Activated B cell treated with CpG ODN at 0.5 μM for 24 hours (primary cell): ENCODE measurements at regions of chr19 and their contacts with region 1.

Region 1: GRCh38 chr19:29941828-29942403 is at the start of gene URI1:
- DNase-seq: peak; percentile 99
- ATAC-seq: peak; percentile 91
- H3K4me3 Mint-ChIP-seq: peak within 1 kb of the TSS; percentile 96
- H3K27ac Mint-ChIP-seq: peak within 1 kb of the TSS; percentile 92
- H3K4me1 Mint-ChIP-seq: peaks cover 36% of the 10 kb centered on the region
- H3K27me3 Mint-ChIP-seq: peaks cover 7% of the 10 kb centered on the region
- CTCF ChIP-seq: no peak
- total RNA-seq, gene URI1: 49.8 and 50.6 TPM in 2 replicates

Region 2: GRCh38 chr19:29212648-29213573 is 729.0 kb before region 1 on chr19 and contains the start of gene UQCRFS1:
- CTCF ChIA-PET with region 1: no interaction called
- POLR2A ChIA-PET with region 1: no interaction called
- intact Hi-C with region 1: loop called (anchors 2 kb)
- DNase-seq: peak; percentile 92
- ATAC-seq: peak; percentile 96
- H3K4me3 Mint-ChIP-seq: peak within 1 kb of the TSS; percentile 92
- H3K27ac Mint-ChIP-seq: peak within 1 kb of the TSS; percentile 88
- H3K4me1 Mint-ChIP-seq: peaks cover 38% of the 10 kb centered on the region
- H3K27me3 Mint-ChIP-seq: peaks cover 9% of the 10 kb centered on the region
- CTCF ChIP-seq: no peak
- total RNA-seq, gene UQCRFS1: 22.9 and 24.4 TPM in 2 replicates

Region 3: GRCh38 chr19:29680447-29680846 is 261.5 kb before region 1 on chr19:
- CTCF ChIA-PET with region 1: no interaction called
- POLR2A ChIA-PET with region 1: no interaction called
- intact Hi-C with region 1: loop called (anchors 1 kb)
- DNase-seq: peak; percentile 55
- ATAC-seq: peak; percentile 97
- H3K4me3 Mint-ChIP-seq: peak overlapping the region; percentile 60
- H3K27ac Mint-ChIP-seq: peak overlapping the region; percentile 79
- H3K4me1 Mint-ChIP-seq: peaks cover 33% of the 10 kb centered on the region
- H3K27me3 Mint-ChIP-seq: no peaks in the 10 kb centered on the region
- CTCF ChIP-seq: no peak

Region 4: DNA sequence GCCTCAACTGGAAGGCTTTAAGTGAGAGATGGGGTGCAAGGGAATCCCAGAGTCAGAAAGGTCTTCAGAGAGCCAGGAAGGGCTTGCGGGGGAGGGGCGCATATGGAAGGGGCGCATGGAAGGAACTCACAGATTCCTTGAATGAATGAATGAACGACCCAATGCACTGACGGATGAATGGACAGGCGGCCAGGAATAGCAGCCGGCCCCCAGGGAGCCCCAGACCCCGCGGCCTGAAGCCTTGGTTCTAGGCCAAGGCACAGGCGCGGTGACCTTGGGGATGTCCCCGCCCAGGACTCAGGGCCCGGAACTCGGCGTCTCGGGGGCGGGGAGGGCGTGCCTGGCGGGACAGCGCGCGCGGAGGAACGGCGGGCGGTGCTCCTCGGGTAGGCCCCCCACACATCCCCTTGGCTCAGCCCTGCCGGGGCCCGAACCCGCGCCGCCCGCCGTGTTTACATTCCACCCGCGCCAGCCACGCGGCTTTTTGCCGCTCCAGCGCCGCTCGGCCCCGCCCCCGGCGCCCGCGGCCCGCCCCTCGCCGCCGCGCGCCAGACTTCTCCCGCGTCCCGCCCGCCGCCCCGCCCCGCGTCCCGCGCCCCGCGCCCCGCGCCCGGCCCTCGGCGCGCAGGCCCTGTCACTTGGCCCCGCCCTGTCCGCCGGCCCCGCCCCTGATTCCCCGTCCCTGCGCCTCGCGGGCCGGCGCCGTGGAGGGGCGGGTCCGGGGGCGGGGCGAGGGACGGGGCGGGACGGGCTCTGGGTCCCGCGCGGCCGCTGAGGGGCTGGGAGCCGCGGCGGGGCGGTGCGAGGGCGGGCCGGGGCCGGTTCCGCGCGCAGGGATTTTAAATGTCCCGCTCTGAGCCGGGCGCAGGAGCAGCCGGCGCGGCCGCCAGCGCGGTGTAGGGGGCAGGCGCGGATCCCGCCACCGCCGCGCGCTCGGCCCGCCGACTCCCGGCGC is 130.5 kb before region 1 on chr19 and contains the start of gene CCNE1:
- CTCF ChIA-PET with region 1: no interaction called
- POLR2A ChIA-PET with region 1: no interaction called
- intact Hi-C with region 1: loop called (anchors 1 kb)
- DNase-seq: peak; percentile 95
- ATAC-seq: peak; percentile 94
- H3K4me3 Mint-ChIP-seq: peak within 1 kb of the TSS; percentile 85
- H3K27ac Mint-ChIP-seq: peak within 1 kb of the TSS; percentile 77
- H3K4me1 Mint-ChIP-seq: peaks cover 18% of the 10 kb centered on the region
- H3K27me3 Mint-ChIP-seq: no peaks in the 10 kb centered on the region
- CTCF ChIP-seq: no peak
- total RNA-seq, gene CCNE1: 3.4 and 4.1 TPM in 2 replicates

Region 5: GRCh38 chr19:29844891-29845572 is 96.9 kb before region 1 on chr19:
- CTCF ChIA-PET with region 1: no interaction called
- POLR2A ChIA-PET with region 1: interaction called, 5 read pairs
- intact Hi-C with region 1: loop called (anchors 1 kb)
- DNase-seq: peak; percentile 94
- ATAC-seq: peak; percentile 80
- H3K4me3 Mint-ChIP-seq: peak overlapping the region; percentile 86
- H3K27ac Mint-ChIP-seq: peak overlapping the region; percentile 68
- H3K4me1 Mint-ChIP-seq: peaks cover 12% of the 10 kb centered on the region
- H3K27me3 Mint-ChIP-seq: peaks cover 9% of the 10 kb centered on the region
- CTCF ChIP-seq: no peak

Region 6: GRCh38 chr19:29978080-29978479 is 36.2 kb after region 1 on chr19:
- CTCF ChIA-PET with region 1: no interaction called
- POLR2A ChIA-PET with region 1: no interaction called
- intact Hi-C with region 1: loop called (anchors 5 kb)
- DNase-seq: no peak
- ATAC-seq: no peak
- H3K4me3 Mint-ChIP-seq: no peak overlapping the region
- H3K27ac Mint-ChIP-seq: no peak overlapping the region
- H3K4me1 Mint-ChIP-seq: peaks cover 43% of the 10 kb centered on the region
- H3K27me3 Mint-ChIP-seq: no peaks in the 10 kb centered on the region
- CTCF ChIP-seq: no peak

Region 7: GRCh38 chr19:30227661-30228428 is 285.9 kb after region 1 on chr19:
- CTCF ChIA-PET with region 1: no interaction called
- POLR2A ChIA-PET with region 1: no interaction called
- intact Hi-C with region 1: loop called (anchors 10 kb)
- DNase-seq: peak; percentile 41
- ATAC-seq: peak; percentile 74
- H3K4me3 Mint-ChIP-seq: no peak overlapping the region
- H3K27ac Mint-ChIP-seq: no peak overlapping the region
- H3K4me1 Mint-ChIP-seq: peaks cover 36% of the 10 kb centered on the region
- H3K27me3 Mint-ChIP-seq: peaks cover 57% of the 10 kb centered on the region
- CTCF ChIP-seq: no peak